ENCODE measurements at regions of chr7 and their contacts with region 1.

Region 1: GRCh38 chr7:130356121-130356875 is 11.7 kb downstream of the CPA5 start:
- DNase-seq: peak; percentile 99
- ATAC-seq: peak; percentile 89
- H3K4me3 ChIP-seq: no peak overlapping the region
- H3K27ac ChIP-seq: peak overlapping the region; percentile 96
- H3K4me1 ChIP-seq: peaks cover 29% of the 10 kb centered on the region
- H3K27me3 ChIP-seq: no peaks in the 10 kb centered on the region
- CTCF ChIP-seq: no peak
- POLR2A ChIP-seq: peak; percentile 70; the same call in 1 of the 2 replicates
- RAD21 ChIP-seq: peak; percentile 30; the same call in 1 of the 2 replicates

Region 2: DNA sequence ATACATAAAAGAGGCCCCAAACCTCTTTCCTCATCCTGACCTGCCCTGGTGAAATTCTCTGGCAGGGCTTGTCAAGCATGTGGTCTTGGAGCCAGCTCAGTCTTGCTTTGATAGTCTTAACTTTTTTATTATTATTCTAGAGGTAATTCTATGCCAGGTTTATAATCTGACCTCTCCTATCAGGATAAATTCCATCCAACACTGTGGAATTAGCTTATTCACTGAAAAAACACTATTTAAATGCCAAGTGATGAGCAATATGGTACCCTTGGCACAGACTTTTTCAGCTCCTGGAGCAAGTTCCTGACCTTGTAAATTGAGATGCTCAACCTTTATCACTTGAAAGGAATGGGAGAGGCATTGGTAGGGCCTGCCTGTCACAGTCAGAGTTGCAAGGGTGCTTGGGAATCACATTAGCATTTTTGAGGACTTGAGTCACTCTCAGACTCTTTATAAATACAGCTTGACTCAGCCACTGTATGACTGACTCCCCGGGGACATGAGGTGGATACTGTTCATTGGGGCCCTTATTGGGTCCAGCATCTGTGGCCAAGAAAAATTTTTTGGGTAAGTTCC is 63.5 kb before region 1 on chr7 and contains the start of gene CPA4:
- CTCF ChIA-PET with region 1: no interaction called
- POLR2A ChIA-PET with region 1: interaction called, 4 read pairs
- dilution Hi-C with region 1: no loop called
- in situ Hi-C with region 1: no loop called
- intact Hi-C with region 1: loop called (anchors 2 kb)
- DNase-seq: peak; percentile 99
- ATAC-seq: peak; percentile 96
- H3K4me3 ChIP-seq: no peak within 1 kb of the TSS
- H3K27ac ChIP-seq: peak within 1 kb of the TSS; percentile 71; the same call in 1 of the 2 replicates
- H3K4me1 ChIP-seq: peaks cover 14% of the 10 kb centered on the region
- H3K27me3 ChIP-seq: no peaks in the 10 kb centered on the region
- CTCF ChIP-seq: no peak
- POLR2A ChIP-seq: peak; percentile 71; the same call in 1 of the 2 replicates
- RAD21 ChIP-seq: no peak
- total RNA-seq, gene CPA4: 365 and 382 TPM in 2 replicates

Region 3: DNA sequence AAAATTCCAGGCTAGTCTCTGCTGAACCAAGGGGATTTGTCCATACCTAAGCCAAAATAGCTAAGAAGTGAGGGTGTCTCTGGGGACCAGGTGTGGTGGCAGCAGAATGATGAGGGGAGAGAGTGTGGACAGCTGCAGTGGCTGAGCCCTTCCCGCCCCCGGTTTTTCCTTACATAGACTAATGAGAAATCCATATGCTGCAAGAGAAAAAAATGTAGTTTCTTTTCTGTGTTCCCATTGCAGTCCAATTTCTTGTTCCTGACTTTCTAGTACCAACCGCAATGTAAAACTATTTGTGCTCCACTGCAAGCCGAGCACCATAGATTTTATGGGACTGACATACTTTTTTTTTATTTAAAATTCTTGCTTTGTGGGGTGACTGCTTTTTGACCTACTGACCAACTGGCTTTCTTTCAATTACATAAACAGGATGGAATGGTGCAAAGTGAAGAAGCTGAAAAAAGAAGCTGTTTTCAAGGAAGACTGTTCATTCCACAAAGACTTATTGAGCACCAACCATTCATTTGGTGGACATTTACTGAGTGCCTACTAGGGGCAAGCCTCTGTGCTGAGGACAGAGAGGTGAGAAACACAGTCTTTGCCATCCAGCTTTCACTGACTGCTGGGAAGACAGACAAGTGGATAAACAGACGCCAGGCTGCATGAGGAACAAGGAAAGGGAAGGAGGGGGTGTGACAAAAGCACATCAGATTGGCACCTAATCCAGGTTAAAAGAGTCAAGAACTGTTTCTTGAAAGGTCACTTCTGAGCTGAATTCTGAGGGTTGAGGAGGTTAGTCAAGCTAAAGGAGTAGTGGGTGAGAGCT is 74.8 kb after region 1 on chr7:
- CTCF ChIA-PET with region 1: no interaction called
- POLR2A ChIA-PET with region 1: no interaction called
- dilution Hi-C with region 1: no loop called
- in situ Hi-C with region 1: no loop called
- intact Hi-C with region 1: loop called (anchors 1 kb)
- DNase-seq: peak; percentile 86
- ATAC-seq: peak; percentile 82
- H3K4me3 ChIP-seq: peak overlapping the region; percentile 44
- H3K27ac ChIP-seq: peak overlapping the region; percentile 86
- H3K4me1 ChIP-seq: peaks cover 13% of the 10 kb centered on the region
- H3K27me3 ChIP-seq: no peaks in the 10 kb centered on the region
- CTCF ChIP-seq: no peak
- POLR2A ChIP-seq: no peak
- RAD21 ChIP-seq: no peak